ENCODE measurements at regions of chr19 and their contacts with region 1.

Region 1: GRCh38 chr19:54189735-54190502 is 539 bp upstream of the MBOAT7 start:
- DNase-seq: peak; percentile 100
- H3K4me3 Mint-ChIP-seq: peak overlapping the region; percentile 82
- H3K27ac Mint-ChIP-seq: peak overlapping the region; percentile 93
- H3K4me1 Mint-ChIP-seq: peaks cover 27% of the 10 kb centered on the region
- H3K27me3 Mint-ChIP-seq: no peaks in the 10 kb centered on the region
- CTCF ChIP-seq: no peak

Region 2: GRCh38 chr19:54137086-54137921 is 52.6 kb before region 1 on chr19 and contains the start of gene CNOT3:
- CTCF ChIA-PET with region 1: interaction called, 12 read pairs
- intact Hi-C with region 1: no loop called
- DNase-seq: peak; percentile 100
- H3K4me3 Mint-ChIP-seq: peak within 1 kb of the TSS; percentile 84
- H3K27ac Mint-ChIP-seq: peak within 1 kb of the TSS; percentile 97
- H3K4me1 Mint-ChIP-seq: peaks cover 34% of the 10 kb centered on the region
- H3K27me3 Mint-ChIP-seq: peaks cover 13% of the 10 kb centered on the region
- CTCF ChIP-seq: no peak
- total RNA-seq, gene CNOT3: 79.4 and 87.4 TPM in 2 replicates

Region 3: DNA sequence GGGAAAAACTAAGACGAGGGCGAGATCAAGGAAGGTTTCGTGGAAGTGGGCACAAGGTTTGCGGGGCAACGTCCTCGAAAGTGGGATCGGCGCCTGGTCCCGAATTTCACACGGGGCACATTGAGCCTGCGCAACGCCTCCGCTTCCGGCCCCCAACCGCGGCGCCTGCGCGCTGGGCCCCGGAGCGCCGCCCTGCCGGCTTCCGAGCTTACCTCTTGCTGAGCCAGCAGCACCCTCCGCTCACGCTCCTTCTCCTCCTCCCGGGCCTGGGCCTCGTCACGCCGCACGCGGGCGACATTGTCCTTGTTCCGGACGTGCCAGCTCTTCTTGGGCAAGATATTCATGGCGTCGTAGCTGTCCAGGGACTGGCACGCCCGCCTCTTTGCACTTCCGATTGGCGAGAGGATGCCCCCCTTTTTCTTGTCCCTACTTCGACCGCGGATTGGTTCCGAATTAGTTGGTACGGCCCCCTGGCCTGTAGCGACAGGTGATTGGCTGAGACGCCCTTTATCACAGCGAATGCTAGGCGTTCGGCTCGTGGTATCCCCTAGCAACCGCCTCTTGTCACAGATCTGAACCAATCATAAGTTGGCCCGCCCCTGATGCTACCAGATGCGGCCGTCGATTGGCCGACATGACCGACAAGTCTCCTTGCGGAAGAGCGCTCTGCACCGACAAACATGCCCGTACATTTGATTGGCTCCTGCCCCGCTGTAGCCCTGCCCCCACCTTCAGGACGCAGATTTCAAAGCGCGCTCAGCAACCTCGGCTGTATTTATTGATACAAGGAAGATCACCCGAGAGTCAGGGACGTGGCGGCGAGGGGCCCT is 30.4 kb before region 1 on chr19 and contains the start of gene LENG1:
- CTCF ChIA-PET with region 1: interaction called, 11 read pairs
- intact Hi-C with region 1: no loop called
- DNase-seq: peak; percentile 99
- H3K4me3 Mint-ChIP-seq: peak within 1 kb of the TSS; percentile 87
- H3K27ac Mint-ChIP-seq: peak within 1 kb of the TSS; percentile 89
- H3K4me1 Mint-ChIP-seq: peaks cover 30% of the 10 kb centered on the region
- H3K27me3 Mint-ChIP-seq: no peaks in the 10 kb centered on the region
- CTCF ChIP-seq: peak; percentile 34
- total RNA-seq, gene LENG1: 9.9 and 10.7 TPM in 2 replicates

Region 4: DNA sequence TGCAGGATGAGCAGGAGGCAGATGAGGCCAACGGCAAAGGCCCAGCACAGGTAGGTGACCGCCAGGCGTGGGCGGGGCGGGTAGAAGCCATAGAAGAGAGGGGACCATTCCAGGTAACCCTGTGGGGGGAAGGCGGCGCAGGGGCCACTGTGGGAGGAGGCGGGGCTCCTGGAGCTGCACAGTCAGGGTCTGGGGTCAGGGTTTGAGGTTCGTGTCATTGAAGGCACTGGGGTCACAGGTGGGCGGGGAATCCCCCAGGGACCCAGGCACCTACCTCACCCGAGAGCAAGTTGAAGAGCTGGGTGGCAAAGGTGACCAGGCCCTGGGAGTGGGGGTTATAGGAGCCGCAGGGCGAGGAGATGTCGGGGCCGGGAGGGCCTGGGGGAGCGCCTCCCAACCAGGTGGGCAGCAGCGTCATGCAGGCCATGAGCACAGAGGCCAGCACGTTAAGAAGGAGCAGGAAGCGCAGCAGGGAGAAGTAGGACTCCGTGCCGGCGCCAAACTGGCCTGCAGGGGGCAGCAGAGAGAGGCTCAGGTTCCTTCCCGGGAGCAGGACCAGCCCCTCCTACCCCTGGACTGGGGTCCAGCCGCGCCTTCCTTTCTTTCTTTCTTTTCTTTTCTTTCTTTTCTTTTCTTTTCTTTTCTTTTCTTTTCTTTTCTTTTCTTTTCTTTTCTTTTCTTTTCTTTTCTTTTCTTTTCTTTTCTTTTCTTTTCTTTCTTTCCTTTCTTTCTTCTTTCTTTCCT is 21.6 kb before region 1 on chr19:
- CTCF ChIA-PET with region 1: interaction called, 35 read pairs
- intact Hi-C with region 1: no loop called
- DNase-seq: peak; percentile 98
- H3K4me3 Mint-ChIP-seq: peak overlapping the region; percentile 11
- H3K27ac Mint-ChIP-seq: peak overlapping the region; percentile 33
- H3K4me1 Mint-ChIP-seq: peaks cover 7% of the 10 kb centered on the region
- H3K27me3 Mint-ChIP-seq: no peaks in the 10 kb centered on the region
- CTCF ChIP-seq: peak; percentile 93

Region 5: GRCh38 chr19:54203151-54203611 is 13.3 kb after region 1 on chr19:
- CTCF ChIA-PET with region 1: interaction called, 15 read pairs
- intact Hi-C with region 1: loop called (anchors 1 kb)
- DNase-seq: peak; percentile 51
- H3K4me3 Mint-ChIP-seq: peak overlapping the region; percentile 75
- H3K27ac Mint-ChIP-seq: peak overlapping the region; percentile 66
- H3K4me1 Mint-ChIP-seq: peaks cover 52% of the 10 kb centered on the region
- H3K27me3 Mint-ChIP-seq: no peaks in the 10 kb centered on the region
- CTCF ChIP-seq: no peak

Region 6: DNA sequence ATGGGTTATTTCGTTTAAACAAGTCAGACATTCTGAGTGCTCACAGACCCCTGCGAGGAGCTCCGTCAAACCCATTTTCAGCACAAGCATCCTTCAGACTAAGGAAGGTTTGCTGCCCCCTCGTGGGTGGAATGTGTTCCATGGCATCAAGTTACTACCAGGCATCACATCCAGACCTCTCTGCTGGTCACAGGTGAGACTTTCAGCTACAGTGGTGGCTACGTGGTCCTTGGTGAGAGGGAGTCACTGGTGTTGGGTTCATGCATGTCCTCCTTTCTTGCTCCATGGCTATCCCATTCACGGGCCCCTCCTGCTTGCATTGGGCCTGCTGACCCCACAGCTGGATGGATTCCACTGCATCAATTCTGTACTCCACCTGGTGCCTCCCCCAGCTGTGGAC is 76.2 kb after region 1 on chr19:
- CTCF ChIA-PET with region 1: interaction called, 21 read pairs
- intact Hi-C with region 1: no loop called
- DNase-seq: peak; percentile 93
- H3K4me3 Mint-ChIP-seq: no peak overlapping the region
- H3K27ac Mint-ChIP-seq: no peak overlapping the region
- H3K4me1 Mint-ChIP-seq: no peaks in the 10 kb centered on the region
- H3K27me3 Mint-ChIP-seq: peaks cover 92% of the 10 kb centered on the region
- CTCF ChIP-seq: peak; percentile 75

Measured in Calu3 (cell line).